ENCODE measurements at regions of chr10 and their contacts with region 1.

Region 1: DNA sequence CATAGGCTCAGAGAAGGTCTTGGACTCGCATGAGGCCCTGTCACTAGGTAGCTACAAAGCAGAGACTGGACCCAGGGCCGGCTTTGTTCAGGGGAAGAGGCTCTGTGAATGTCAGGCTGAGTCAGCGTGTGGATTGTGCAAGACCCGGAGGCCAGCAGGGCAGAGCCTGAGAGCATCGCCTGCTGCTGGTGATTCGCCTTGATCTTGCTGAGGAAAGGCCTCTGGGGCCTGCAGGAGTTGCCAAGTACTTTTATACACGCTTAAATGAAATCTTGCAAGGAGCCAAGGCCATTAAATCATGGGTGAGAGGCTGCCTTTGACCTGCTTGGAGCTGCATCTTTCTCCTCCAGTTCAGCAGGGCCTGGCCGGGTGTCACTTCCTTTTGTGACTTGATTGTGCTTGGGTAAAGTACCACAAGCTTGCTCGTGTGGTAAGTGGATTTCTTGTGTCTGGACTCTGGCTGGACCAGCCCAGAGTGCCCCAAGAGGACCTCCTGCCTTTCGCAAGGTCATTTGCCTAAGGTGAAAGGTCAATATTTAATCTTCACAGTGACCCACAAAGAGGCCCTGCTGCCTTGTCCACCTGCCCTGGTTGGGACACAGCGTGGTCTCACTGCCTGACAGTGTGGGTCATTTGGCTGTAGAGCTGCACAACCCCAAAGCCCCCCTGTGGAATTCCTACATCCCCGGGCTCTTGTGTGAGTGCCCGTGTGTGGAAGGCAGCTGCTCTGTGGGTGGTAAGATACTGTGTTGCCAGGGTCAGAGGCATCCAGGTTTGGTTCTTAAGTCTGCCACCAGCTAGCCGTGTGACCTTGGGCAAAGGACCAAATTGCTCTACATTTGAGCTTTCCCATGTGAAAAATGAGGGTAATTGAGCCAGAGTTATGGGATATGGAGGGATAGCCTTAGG is 38.6 kb upstream of the SH2D4B start:
- DNase-seq: peak; percentile 32
- ATAC-seq: no peak
- H3K4me3 ChIP-seq: no peak overlapping the region
- H3K4me3 Mint-ChIP-seq: peak overlapping the region; percentile 89
- H3K27ac ChIP-seq: peak overlapping the region; percentile 44 to 59
- H3K27ac Mint-ChIP-seq: peak overlapping the region; percentile 95
- H3K4me1 ChIP-seq: peaks cover 51 to 70% of the 10 kb centered on the region in 2 donors
- H3K4me1 Mint-ChIP-seq: peaks cover 69% of the 10 kb centered on the region
- H3K27me3 ChIP-seq: no peaks in the 10 kb centered on the region
- H3K27me3 Mint-ChIP-seq: no peaks in the 10 kb centered on the region
- CTCF ChIP-seq: no peak

Region 2: GRCh38 chr10:80344276-80344675 is 154.8 kb before region 1 on chr10:
- CTCF ChIA-PET with region 1: no interaction called
- POLR2A ChIA-PET with region 1: no interaction called
- intact Hi-C with region 1: no loop called
- DNase-seq: no peak
- ATAC-seq: no peak
- H3K4me3 ChIP-seq: no peak overlapping the region
- H3K4me3 Mint-ChIP-seq: no peak overlapping the region
- H3K27ac ChIP-seq: no peak overlapping the region
- H3K27ac Mint-ChIP-seq: no peak overlapping the region
- H3K4me1 ChIP-seq: no peaks in the 10 kb centered on the region
- H3K4me1 Mint-ChIP-seq: no peaks in the 10 kb centered on the region
- H3K27me3 ChIP-seq: peaks cover 0 to 3% (median 0%) of the 10 kb centered on the region in 4 experiments
- H3K27me3 Mint-ChIP-seq: peaks cover 12% of the 10 kb centered on the region
- CTCF ChIP-seq: no peak

Region 3: GRCh38 chr10:80382989-80383388 is 116.1 kb before region 1 on chr10:
- CTCF ChIA-PET with region 1: interaction called, 273 read pairs
- POLR2A ChIA-PET with region 1: no interaction called
- intact Hi-C with region 1: no loop called
- DNase-seq: peak; percentile 60
- ATAC-seq: peak; percentile 54
- H3K4me3 ChIP-seq: no peak overlapping the region
- H3K4me3 Mint-ChIP-seq: no peak overlapping the region
- H3K27ac ChIP-seq: no peak overlapping the region
- H3K27ac Mint-ChIP-seq: no peak overlapping the region
- H3K4me1 ChIP-seq: peaks cover 4 to 6% of the 10 kb centered on the region in 2 donors
- H3K4me1 Mint-ChIP-seq: peaks cover 8% of the 10 kb centered on the region
- H3K27me3 ChIP-seq: peaks cover 0 to 3% (median 1%) of the 10 kb centered on the region in 4 experiments
- H3K27me3 Mint-ChIP-seq: peaks cover 5% of the 10 kb centered on the region
- CTCF ChIP-seq: peak; percentile 79

Region 4: GRCh38 chr10:80453701-80454513 is 45.2 kb before region 1 on chr10 and contains the start of gene TSPAN14:
- CTCF ChIA-PET with region 1: interaction called, 500 read pairs
- POLR2A ChIA-PET with region 1: interaction called, 5 read pairs
- intact Hi-C with region 1: loop called (anchors 1 kb)
- DNase-seq: peak; percentile 88
- ATAC-seq: peak; percentile 79
- H3K4me3 ChIP-seq: peak within 1 kb of the TSS; percentile 58 to 92 (median 77)
- H3K4me3 Mint-ChIP-seq: peak within 1 kb of the TSS; percentile 94
- H3K27ac ChIP-seq: peak within 1 kb of the TSS; percentile 62 to 83
- H3K27ac Mint-ChIP-seq: peak within 1 kb of the TSS; percentile 94
- H3K4me1 ChIP-seq: peaks cover 31 to 47% of the 10 kb centered on the region in 2 donors
- H3K4me1 Mint-ChIP-seq: peaks cover 47% of the 10 kb centered on the region
- H3K27me3 ChIP-seq: no peaks in the 10 kb centered on the region
- H3K27me3 Mint-ChIP-seq: no peaks in the 10 kb centered on the region
- CTCF ChIP-seq: no peak
- total RNA-seq, gene TSPAN14: 54.9 and 55.3 TPM in 2 replicates

Region 5: DNA sequence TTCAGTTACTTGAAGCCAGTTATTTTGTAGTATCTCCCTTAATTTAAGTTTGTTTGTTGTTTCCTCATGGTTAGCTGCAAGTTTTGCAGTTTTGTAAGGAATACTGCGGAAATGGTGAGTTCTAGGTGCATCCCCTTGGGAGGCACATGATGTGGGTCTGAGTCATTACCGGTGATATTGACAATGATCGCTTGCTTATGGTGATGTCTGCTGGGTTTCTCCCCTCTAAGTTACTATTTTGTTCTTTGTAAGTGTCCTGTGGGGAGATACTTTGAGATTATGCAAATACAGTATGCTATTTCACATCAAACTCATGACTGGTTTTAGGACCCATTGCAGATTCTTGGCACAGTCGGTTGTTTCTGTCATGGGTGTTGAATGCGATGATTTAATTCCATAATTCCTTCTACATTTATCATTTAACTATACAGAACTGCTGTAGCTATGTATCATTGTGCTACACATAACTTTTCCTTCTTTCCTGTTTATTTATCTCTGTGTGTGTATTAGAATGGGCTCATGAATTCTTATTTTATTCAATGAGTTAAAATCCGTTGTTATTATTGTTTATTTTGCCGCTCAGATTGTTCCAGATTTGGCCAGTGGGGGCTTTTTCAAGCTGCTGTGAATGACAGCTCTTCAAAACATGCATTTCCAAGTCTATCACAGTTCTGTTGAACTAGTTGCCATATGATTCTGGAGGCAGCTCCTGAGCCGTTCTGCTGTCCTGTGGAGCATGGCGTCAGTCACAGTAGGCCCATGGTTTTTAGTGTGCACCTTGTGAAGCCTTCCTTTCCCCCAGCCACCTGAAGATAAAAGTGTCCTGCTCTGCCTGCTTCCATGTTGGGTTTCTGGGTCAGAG is 26.6 kb before region 1 on chr10:
- CTCF ChIA-PET with region 1: interaction called, 51 read pairs
- POLR2A ChIA-PET with region 1: interaction called, 4 read pairs
- intact Hi-C with region 1: loop called (anchors 1 kb)
- DNase-seq: peak; percentile 63
- ATAC-seq: peak; percentile 88
- H3K4me3 ChIP-seq: no peak overlapping the region
- H3K4me3 Mint-ChIP-seq: peak overlapping the region; percentile 60
- H3K27ac ChIP-seq: peak overlapping the region; percentile 49 to 75
- H3K27ac Mint-ChIP-seq: peak overlapping the region; percentile 89
- H3K4me1 ChIP-seq: peaks cover 41 to 48% of the 10 kb centered on the region in 2 donors
- H3K4me1 Mint-ChIP-seq: peaks cover 61% of the 10 kb centered on the region
- H3K27me3 ChIP-seq: no peaks in the 10 kb centered on the region
- H3K27me3 Mint-ChIP-seq: no peaks in the 10 kb centered on the region
- CTCF ChIP-seq: no peak

Region 6: GRCh38 chr10:80535671-80536365 is 36.7 kb after region 1 on chr10:
- CTCF ChIA-PET with region 1: no interaction called
- POLR2A ChIA-PET with region 1: no interaction called
- intact Hi-C with region 1: no loop called
- DNase-seq: peak; percentile 84
- ATAC-seq: peak; percentile 87
- H3K4me3 ChIP-seq: peak overlapping the region; percentile 57 to 75 (median 63)
- H3K4me3 Mint-ChIP-seq: peak overlapping the region; percentile 90
- H3K27ac ChIP-seq: peak overlapping the region; percentile 76 to 79
- H3K27ac Mint-ChIP-seq: peak overlapping the region; percentile 94
- H3K4me1 ChIP-seq: peaks cover 19 to 38% of the 10 kb centered on the region in 2 donors
- H3K4me1 Mint-ChIP-seq: peaks cover 35% of the 10 kb centered on the region
- H3K27me3 ChIP-seq: no peaks in the 10 kb centered on the region
- H3K27me3 Mint-ChIP-seq: peaks cover 4% of the 10 kb centered on the region
- CTCF ChIP-seq: peak; percentile 87

Region 7: GRCh38 chr10:80649183-80649582 is 150.1 kb after region 1 on chr10:
- CTCF ChIA-PET with region 1: no interaction called
- POLR2A ChIA-PET with region 1: interaction called, 11 read pairs
- intact Hi-C with region 1: no loop called
- DNase-seq: no peak
- ATAC-seq: no peak
- H3K4me3 ChIP-seq: no peak overlapping the region
- H3K4me3 Mint-ChIP-seq: no peak overlapping the region
- H3K27ac ChIP-seq: no peak overlapping the region
- H3K27ac Mint-ChIP-seq: no peak overlapping the region
- H3K4me1 ChIP-seq: no peaks in the 10 kb centered on the region
- H3K4me1 Mint-ChIP-seq: no peaks in the 10 kb centered on the region
- H3K27me3 ChIP-seq: peaks cover 0 to 3% (median 0%) of the 10 kb centered on the region in 4 experiments
- H3K27me3 Mint-ChIP-seq: peaks cover 18% of the 10 kb centered on the region
- CTCF ChIP-seq: no peak

Region 8: DNA sequence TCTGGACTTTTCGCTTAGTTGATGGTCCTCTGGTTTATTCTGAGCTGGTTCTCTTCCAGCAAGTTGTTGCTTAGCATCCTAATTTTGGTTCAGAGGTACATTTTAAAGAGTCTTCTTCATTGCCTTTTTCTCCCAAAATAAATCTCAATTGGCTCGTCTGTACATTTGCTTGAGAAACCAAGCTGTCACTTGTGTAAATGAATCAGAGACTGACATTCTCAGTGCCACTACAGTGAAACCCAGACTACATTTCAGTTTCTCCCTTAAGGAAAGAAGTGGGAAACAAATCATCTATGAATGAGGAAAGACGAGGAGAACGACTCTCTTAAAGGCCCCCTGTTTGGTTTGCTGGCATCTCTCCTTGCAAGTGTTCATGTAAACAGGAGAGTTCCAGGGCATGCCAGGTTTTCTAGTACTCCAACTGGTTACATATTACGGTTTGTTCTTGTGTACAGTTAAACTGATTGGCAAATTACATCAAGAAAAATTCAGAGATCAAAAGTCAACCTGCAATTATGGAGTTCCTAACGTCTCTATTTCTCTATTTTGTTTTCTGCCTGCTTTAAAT is 693.2 kb after region 1 on chr10:
- CTCF ChIA-PET with region 1: no interaction called
- POLR2A ChIA-PET with region 1: no interaction called
- intact Hi-C with region 1: no loop called
- DNase-seq: no peak
- ATAC-seq: no peak
- H3K4me3 ChIP-seq: no peak overlapping the region
- H3K4me3 Mint-ChIP-seq: no peak overlapping the region
- H3K27ac ChIP-seq: no peak overlapping the region
- H3K27ac Mint-ChIP-seq: no peak overlapping the region
- H3K4me1 ChIP-seq: no peaks in the 10 kb centered on the region
- H3K4me1 Mint-ChIP-seq: no peaks in the 10 kb centered on the region
- H3K27me3 ChIP-seq: no peaks in the 10 kb centered on the region
- H3K27me3 Mint-ChIP-seq: no peaks in the 10 kb centered on the region
- CTCF ChIP-seq: no peak

Measured in B cell (primary cell).